Activated B cell treated with CpG ODN at 0.5 μM for 24 hours (primary cell): ENCODE measurements at regions of chr4 and their contacts with region 1.

Region 1: GRCh38 chr4:184310171-184310567 is 92.5 kb upstream of the ENPP6 start:
- DNase-seq: no peak
- ATAC-seq: peak; percentile 23
- H3K4me3 Mint-ChIP-seq: no peak overlapping the region
- H3K27ac Mint-ChIP-seq: peak overlapping the region; percentile 51
- H3K4me1 Mint-ChIP-seq: peaks cover 61% of the 10 kb centered on the region
- H3K27me3 Mint-ChIP-seq: no peaks in the 10 kb centered on the region
- CTCF ChIP-seq: no peak

Region 2: GRCh38 chr4:183074296-183074990 is 1235.7 kb before region 1 on chr4:
- CTCF ChIA-PET with region 1: no interaction called
- POLR2A ChIA-PET with region 1: no interaction called
- intact Hi-C with region 1: no loop called
- DNase-seq: no peak
- ATAC-seq: no peak
- H3K4me3 Mint-ChIP-seq: no peak overlapping the region
- H3K27ac Mint-ChIP-seq: no peak overlapping the region
- H3K4me1 Mint-ChIP-seq: no peaks in the 10 kb centered on the region
- H3K27me3 Mint-ChIP-seq: peaks cover 7% of the 10 kb centered on the region
- CTCF ChIP-seq: no peak

Region 3: GRCh38 chr4:183876268-183876934 is 433.8 kb before region 1 on chr4:
- CTCF ChIA-PET with region 1: no interaction called
- POLR2A ChIA-PET with region 1: no interaction called
- intact Hi-C with region 1: no loop called
- DNase-seq: no peak
- ATAC-seq: no peak
- H3K4me3 Mint-ChIP-seq: no peak overlapping the region
- H3K27ac Mint-ChIP-seq: no peak overlapping the region
- H3K4me1 Mint-ChIP-seq: no peaks in the 10 kb centered on the region
- H3K27me3 Mint-ChIP-seq: peaks cover 2% of the 10 kb centered on the region
- CTCF ChIP-seq: no peak

Region 4: DNA sequence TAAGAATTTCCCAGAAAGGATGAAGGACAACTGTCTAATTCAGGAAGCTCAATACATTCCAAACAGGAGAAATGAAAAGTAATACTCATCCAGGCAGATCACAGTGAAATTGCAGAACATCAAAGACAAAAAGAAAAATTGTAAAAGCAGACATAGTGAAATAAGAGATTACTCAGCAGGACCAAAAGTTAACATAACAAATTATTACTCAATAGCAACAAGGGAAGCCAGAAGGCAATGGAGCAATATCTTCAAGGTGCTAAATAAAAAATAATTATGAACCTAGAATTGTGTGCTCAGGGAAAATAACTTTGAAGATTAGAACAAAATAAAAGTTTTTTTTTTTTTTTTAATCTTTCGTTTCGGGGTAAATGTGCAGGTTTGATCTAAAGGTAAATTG is 62.0 kb before region 1 on chr4:
- CTCF ChIA-PET with region 1: no interaction called
- POLR2A ChIA-PET with region 1: no interaction called
- intact Hi-C with region 1: no loop called
- DNase-seq: no peak
- ATAC-seq: no peak
- H3K4me3 Mint-ChIP-seq: no peak overlapping the region
- H3K27ac Mint-ChIP-seq: no peak overlapping the region
- H3K4me1 Mint-ChIP-seq: peaks cover 4% of the 10 kb centered on the region
- H3K27me3 Mint-ChIP-seq: peaks cover 8% of the 10 kb centered on the region
- CTCF ChIP-seq: no peak

Region 5: GRCh38 chr4:184282251-184282713 is 27.9 kb before region 1 on chr4:
- CTCF ChIA-PET with region 1: interaction called, 4 read pairs
- POLR2A ChIA-PET with region 1: interaction called, 35 read pairs
- intact Hi-C with region 1: loop called (anchors 1 kb)
- DNase-seq: no peak
- ATAC-seq: peak; percentile 40
- H3K4me3 Mint-ChIP-seq: peak overlapping the region; percentile 32
- H3K27ac Mint-ChIP-seq: peak overlapping the region; percentile 83
- H3K4me1 Mint-ChIP-seq: peaks cover 66% of the 10 kb centered on the region
- H3K27me3 Mint-ChIP-seq: no peaks in the 10 kb centered on the region
- CTCF ChIP-seq: no peak

Region 6: GRCh38 chr4:184287697-184288255 is 22.4 kb before region 1 on chr4:
- CTCF ChIA-PET with region 1: interaction called, 6 read pairs
- POLR2A ChIA-PET with region 1: interaction called, 35 read pairs
- intact Hi-C with region 1: loop called (anchors 1 kb)
- DNase-seq: no peak
- ATAC-seq: no peak
- H3K4me3 Mint-ChIP-seq: peak overlapping the region; percentile 77
- H3K27ac Mint-ChIP-seq: peak overlapping the region; percentile 91
- H3K4me1 Mint-ChIP-seq: peaks cover 61% of the 10 kb centered on the region
- H3K27me3 Mint-ChIP-seq: no peaks in the 10 kb centered on the region
- CTCF ChIP-seq: no peak

Region 7: GRCh38 chr4:184375027-184375426 is 64.9 kb after region 1 on chr4:
- CTCF ChIA-PET with region 1: no interaction called
- POLR2A ChIA-PET with region 1: no interaction called
- intact Hi-C with region 1: loop called (anchors 2 kb)
- DNase-seq: no peak
- ATAC-seq: peak; percentile 22
- H3K4me3 Mint-ChIP-seq: no peak overlapping the region
- H3K27ac Mint-ChIP-seq: peak overlapping the region; percentile 82
- H3K4me1 Mint-ChIP-seq: peaks cover 38% of the 10 kb centered on the region
- H3K27me3 Mint-ChIP-seq: no peaks in the 10 kb centered on the region
- CTCF ChIP-seq: no peak

Region 8: DNA sequence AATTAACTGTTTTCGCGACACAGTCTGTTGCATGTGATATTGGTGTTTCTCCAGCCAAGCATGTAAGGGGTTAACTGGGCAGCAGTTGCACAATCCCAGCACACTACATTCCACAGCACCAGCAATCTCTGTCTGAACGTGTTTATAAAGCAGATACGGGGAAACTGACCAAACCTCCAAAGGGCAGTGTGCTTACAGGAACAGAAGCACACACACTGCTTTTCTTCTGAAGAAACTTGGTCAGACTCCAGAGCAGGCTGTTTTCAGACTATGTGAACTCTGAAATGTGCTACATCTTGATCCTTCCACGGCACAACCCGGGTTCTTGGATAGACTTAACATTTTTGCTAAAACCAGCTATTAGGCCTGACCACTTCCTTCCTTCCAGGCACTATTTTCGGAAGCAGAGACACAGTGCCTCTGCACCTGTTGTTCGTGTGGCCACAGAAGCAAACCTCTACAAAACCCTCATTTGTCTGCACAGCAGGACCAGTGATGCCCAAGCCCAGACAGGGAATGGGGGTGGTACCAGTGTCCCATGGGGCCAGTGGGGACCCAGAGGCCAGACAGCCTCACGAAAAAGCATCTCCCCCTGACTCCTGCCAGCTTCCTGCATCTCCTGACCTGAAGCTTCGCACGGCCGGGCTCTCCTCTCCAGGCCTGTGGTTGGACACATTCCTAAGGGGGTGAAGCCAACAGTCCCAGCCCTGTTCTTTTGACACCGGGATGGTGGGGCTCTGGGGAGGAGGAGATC is 74.1 kb after region 1 on chr4:
- CTCF ChIA-PET with region 1: no interaction called
- POLR2A ChIA-PET with region 1: interaction called, 6 read pairs
- intact Hi-C with region 1: loop called (anchors 1 kb)
- DNase-seq: no peak
- ATAC-seq: peak; percentile 36
- H3K4me3 Mint-ChIP-seq: peak overlapping the region; percentile 72
- H3K27ac Mint-ChIP-seq: peak overlapping the region; percentile 79
- H3K4me1 Mint-ChIP-seq: peaks cover 88% of the 10 kb centered on the region
- H3K27me3 Mint-ChIP-seq: no peaks in the 10 kb centered on the region
- CTCF ChIP-seq: no peak

Region 9: GRCh38 chr4:185782523-185782922 is 1472.4 kb after region 1 on chr4:
- CTCF ChIA-PET with region 1: no interaction called
- POLR2A ChIA-PET with region 1: no interaction called
- intact Hi-C with region 1: no loop called
- DNase-seq: no peak
- ATAC-seq: no peak
- H3K4me3 Mint-ChIP-seq: no peak overlapping the region
- H3K27ac Mint-ChIP-seq: no peak overlapping the region
- H3K4me1 Mint-ChIP-seq: no peaks in the 10 kb centered on the region
- H3K27me3 Mint-ChIP-seq: peaks cover 4% of the 10 kb centered on the region
- CTCF ChIP-seq: no peak